ENCODE measurements at regions of chr6 and their contacts with region 1.

Region 1: DNA sequence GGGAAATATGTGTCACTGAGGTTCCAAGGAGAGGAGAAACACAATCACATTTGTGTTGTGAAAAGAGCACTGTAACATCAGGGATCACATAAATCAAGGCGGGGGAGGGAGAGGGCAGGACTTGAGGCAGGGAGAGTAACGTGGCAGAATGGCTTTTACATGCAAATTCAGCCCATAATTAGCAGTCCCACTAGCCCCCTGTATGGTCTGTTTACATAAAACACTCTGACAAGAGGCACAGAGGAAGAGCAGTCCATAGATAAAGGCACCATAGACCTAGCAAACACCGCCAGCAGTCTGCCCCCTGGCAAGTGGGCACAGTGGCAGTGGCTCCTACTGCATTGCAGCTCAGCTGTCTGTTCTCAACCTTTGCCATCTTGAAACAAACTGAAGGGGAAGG is 82.7 kb downstream of the LYRM2 start:
- DNase-seq: no peak
- H3K4me3 ChIP-seq: peak overlapping the region in 2 of 4 experiments; percentile 10 to 16; a peak in 1 of 8 replicates
- H3K27ac ChIP-seq: no peak overlapping the region
- H3K4me1 ChIP-seq: peaks cover 2 to 10% (median 8%) of the 10 kb centered on the region in 4 experiments; a peak in 6 of 7 replicates
- H3K27me3 ChIP-seq: peaks cover 0 to 3% (median 0%) of the 10 kb centered on the region in 4 experiments; a peak in 1 of 7 replicates
- CTCF ChIP-seq: no peak
- EP300 ChIP-seq: no peak
- POLR2A ChIP-seq: no peak
- RAD21 ChIP-seq: no peak

Region 2: DNA sequence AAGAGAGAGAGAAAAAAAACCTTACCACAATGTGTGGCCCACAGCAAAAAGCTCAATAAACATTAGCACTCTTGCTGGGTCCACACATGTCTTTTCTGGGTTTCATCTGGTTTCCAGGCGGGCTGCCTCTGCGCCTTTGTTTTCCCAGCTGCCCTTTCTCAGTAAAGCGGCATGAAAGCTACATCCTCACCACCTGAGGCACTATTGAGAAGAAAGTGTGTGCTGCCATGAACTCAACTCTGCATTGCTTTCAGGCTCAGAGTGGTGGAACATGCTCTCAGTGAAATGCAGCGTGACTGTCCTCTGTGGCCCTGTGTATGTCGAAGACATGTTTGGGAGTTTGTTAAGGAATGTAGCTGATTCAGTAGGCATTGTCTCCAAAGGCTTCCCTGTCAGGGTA is 19.6 kb before region 1 on chr6:
- CTCF ChIA-PET with region 1: interaction called, 13 read pairs
- POLR2A ChIA-PET with region 1: interaction called, 3 read pairs
- DNase-seq: no peak
- H3K4me3 ChIP-seq: no peak overlapping the region
- H3K27ac ChIP-seq: no peak overlapping the region
- H3K4me1 ChIP-seq: peaks cover 0 to 5% (median 2%) of the 10 kb centered on the region in 4 experiments; a peak in 2 of 7 replicates
- H3K27me3 ChIP-seq: no peaks in the 10 kb centered on the region
- CTCF ChIP-seq: peak; percentile 22 to 63 (median 44)
- EP300 ChIP-seq: no peak
- POLR2A ChIP-seq: no peak
- RAD21 ChIP-seq: peak; percentile 47 to 62

Region 3: DNA sequence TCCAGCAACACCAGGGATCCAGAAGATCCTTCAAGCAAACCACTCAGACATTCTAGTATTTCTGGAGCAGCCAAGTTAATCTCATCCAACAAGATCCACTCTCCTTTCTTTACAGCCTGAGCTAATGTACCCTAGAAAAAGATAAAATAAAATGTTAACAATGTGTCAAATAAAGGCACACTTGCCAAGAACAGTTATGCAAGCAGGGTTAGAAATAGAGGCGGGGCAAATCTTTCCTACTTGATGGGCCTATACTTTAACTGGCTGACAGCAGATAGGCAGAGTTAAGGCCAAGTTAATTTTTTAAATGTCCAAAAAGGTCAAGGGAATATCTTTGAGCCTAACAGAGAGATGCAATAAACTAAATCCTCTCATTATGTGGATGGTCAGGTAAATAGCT is 203.0 kb after region 1 on chr6:
- CTCF ChIA-PET with region 1: no interaction called
- POLR2A ChIA-PET with region 1: no interaction called
- DNase-seq: no peak
- H3K4me3 ChIP-seq: no peak overlapping the region
- H3K27ac ChIP-seq: no peak overlapping the region
- H3K4me1 ChIP-seq: no peaks in the 10 kb centered on the region
- H3K27me3 ChIP-seq: no peaks in the 10 kb centered on the region
- CTCF ChIP-seq: no peak
- EP300 ChIP-seq: no peak
- POLR2A ChIP-seq: no peak
- RAD21 ChIP-seq: no peak

Measured in H1 (cell line).